ENCODE measurements at regions of chr7 and their contacts with region 1.

Region 1: DNA sequence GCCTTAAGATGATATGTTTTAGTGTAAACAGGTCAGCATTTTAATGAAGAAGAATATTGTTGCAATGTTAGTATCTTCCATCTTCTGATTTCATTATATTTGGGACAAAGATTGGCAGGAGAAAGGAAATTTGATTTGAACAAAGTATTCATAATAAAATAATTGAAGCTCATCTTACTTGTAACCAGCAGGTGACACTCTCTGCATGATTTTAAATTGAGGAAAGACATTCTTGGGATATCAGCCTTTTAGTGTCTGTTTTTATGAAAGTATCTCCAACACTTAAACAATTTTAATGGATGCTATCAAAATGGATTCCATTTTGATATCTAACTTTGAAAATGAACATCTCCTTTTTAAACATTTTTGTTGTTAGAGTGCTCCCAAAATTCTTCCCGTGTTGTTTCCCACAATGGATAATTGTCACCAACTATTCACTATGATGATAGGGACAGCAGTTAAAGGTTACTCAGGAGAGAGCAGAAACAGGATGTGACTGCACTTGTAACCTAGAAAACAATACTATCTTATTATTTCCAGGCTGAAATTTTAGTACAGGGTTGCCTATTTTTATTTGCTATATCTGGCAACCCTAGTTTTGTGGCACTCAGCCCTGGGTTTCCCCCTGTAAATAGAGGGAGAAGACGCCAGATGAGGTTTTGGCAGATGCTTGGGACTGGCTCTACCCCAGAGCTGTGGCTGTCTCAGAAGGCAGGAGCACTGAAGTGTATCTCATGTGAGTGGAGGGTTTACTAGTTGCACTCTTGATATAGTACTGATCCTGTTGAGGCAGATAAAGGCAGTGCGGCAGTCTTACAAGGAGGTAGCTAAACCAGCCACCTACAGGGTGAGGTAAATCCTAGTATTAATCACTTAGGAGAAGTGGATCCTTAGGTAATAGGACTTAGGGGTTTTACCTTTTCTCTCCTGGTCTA is 31.0 kb upstream of the ABCB4 start:
- DNase-seq: peak; percentile 5
- H3K4me3 ChIP-seq: no peak overlapping the region
- CTCF ChIP-seq: no peak

Region 2: GRCh38 chr7:88109612-88110011 is 603.1 kb after region 1 on chr7:
- CTCF ChIA-PET with region 1: interaction called, 11 read pairs
- POLR2A ChIA-PET with region 1: no interaction called
- DNase-seq: no peak
- H3K4me3 ChIP-seq: no peak overlapping the region
- CTCF ChIP-seq: no peak